ENCODE measurements at regions of chr3 and their contacts with region 1.

Region 1: GRCh38 chr3:9649791-9650521 is 651 bp downstream of the MTMR14 start:
- DNase-seq: no peak
- H3K4me3 ChIP-seq: peak overlapping the region; percentile 91
- H3K4me3 Mint-ChIP-seq: peak overlapping the region; percentile 84
- H3K27ac Mint-ChIP-seq: peak overlapping the region; percentile 72
- H3K4me1 ChIP-seq: no peaks in the 10 kb centered on the region
- H3K4me1 Mint-ChIP-seq: no peaks in the 10 kb centered on the region
- H3K27me3 ChIP-seq: no peaks in the 10 kb centered on the region
- H3K27me3 Mint-ChIP-seq: no peaks in the 10 kb centered on the region
- CTCF ChIP-seq: no peak

Region 2: DNA sequence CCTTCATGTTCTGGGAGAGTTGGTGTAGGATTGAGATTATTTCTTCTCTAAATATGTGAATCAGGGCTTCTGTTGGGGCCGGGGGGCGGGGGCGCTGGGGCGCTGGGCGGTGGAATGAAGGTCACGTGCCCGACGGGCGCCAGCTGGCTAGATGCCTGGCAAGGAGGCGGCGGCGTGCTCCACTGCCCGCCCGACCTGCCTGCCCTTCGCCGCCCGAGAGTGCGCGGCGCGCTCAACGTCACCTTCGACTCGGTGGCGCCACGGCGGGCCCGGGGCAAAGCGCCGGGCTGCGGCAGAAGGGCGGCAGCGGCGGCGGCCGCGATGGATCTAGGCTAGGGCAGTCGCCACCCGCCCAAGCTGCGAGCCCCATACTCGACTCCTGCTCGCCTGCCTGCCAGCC is 49.4 kb before region 1 on chr3:
- CTCF ChIA-PET with region 1: no interaction called
- POLR2A ChIA-PET with region 1: no interaction called
- intact Hi-C with region 1: no loop called
- DNase-seq: no peak
- H3K4me3 ChIP-seq: no peak overlapping the region
- H3K4me3 Mint-ChIP-seq: no peak overlapping the region
- H3K27ac Mint-ChIP-seq: no peak overlapping the region
- H3K4me1 ChIP-seq: no peaks in the 10 kb centered on the region
- H3K4me1 Mint-ChIP-seq: no peaks in the 10 kb centered on the region
- H3K27me3 ChIP-seq: no peaks in the 10 kb centered on the region
- H3K27me3 Mint-ChIP-seq: no peaks in the 10 kb centered on the region
- CTCF ChIP-seq: no peak

Region 3: GRCh38 chr3:9731206-9732079 is 81.5 kb after region 1 on chr3 and contains the start of gene BRPF1:
- CTCF ChIA-PET with region 1: no interaction called
- POLR2A ChIA-PET with region 1: interaction called, 3 read pairs
- intact Hi-C with region 1: loop called (anchors 1 kb)
- DNase-seq: peak; percentile 98 to 99
- H3K4me3 ChIP-seq: peak within 1 kb of the TSS; percentile 85
- H3K4me3 Mint-ChIP-seq: peak within 1 kb of the TSS; percentile 84
- H3K27ac Mint-ChIP-seq: peak within 1 kb of the TSS; percentile 83
- H3K4me1 ChIP-seq: peaks cover 7% of the 10 kb centered on the region; the same call in 1 of the 2 replicates
- H3K4me1 Mint-ChIP-seq: peaks cover 23% of the 10 kb centered on the region
- H3K27me3 ChIP-seq: no peaks in the 10 kb centered on the region
- H3K27me3 Mint-ChIP-seq: no peaks in the 10 kb centered on the region
- CTCF ChIP-seq: no peak
- total RNA-seq, gene BRPF1: 24.7 and 26.0 TPM in 2 replicates

Measured in Caco-2 (cell line).